T-cell (primary cell): ENCODE measurements at regions of chr1 and their contacts with region 1.

Region 1: GRCh38 chr1:167533851-167534300 is 15.5 kb upstream of the CD247 start:
- DNase-seq: peak in 32 of 35 experiments; percentile 24 to 82 (median 58)
- ATAC-seq: peak; percentile 79 to 81 (median 80)
- H3K4me3 ChIP-seq: no peak overlapping the region
- H3K4me3 Mint-ChIP-seq: no peak overlapping the region
- H3K27ac ChIP-seq: no peak overlapping the region
- H3K27ac Mint-ChIP-seq: no peak overlapping the region
- H3K4me1 ChIP-seq: peaks cover 0 to 5% of the 10 kb centered on the region in 2 experiments
- H3K4me1 Mint-ChIP-seq: peaks cover 0 to 4% (median 3%) of the 10 kb centered on the region in 3 donors
- H3K27me3 ChIP-seq: no peaks in the 10 kb centered on the region
- H3K27me3 Mint-ChIP-seq: no peaks in the 10 kb centered on the region

Region 2: DNA sequence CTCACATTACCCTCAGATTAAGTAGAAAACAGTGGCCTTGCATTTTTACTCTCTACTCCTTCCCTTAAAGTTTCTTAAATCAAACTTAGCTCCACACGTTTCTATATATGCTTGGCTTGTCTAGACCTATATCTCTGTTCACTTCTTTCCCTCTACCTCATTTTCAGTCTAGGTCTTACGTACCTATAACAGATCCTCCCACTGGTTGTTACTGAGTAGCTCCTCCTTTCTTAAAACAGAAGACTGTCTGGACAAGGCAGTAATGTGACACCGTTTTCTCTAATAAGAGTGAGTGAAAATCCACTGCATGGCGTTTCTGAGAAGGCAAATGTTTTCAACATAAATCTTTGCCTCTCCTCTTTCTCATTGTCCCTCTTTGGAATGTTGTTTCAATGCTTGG is 906.3 kb before region 1 on chr1:
- CTCF ChIA-PET with region 1: no interaction called
- POLR2A ChIA-PET with region 1: no interaction called
- DNase-seq: no peak
- ATAC-seq: no peak
- H3K4me3 ChIP-seq: no peak overlapping the region
- H3K4me3 Mint-ChIP-seq: no peak overlapping the region
- H3K27ac ChIP-seq: no peak overlapping the region
- H3K27ac Mint-ChIP-seq: no peak overlapping the region
- H3K4me1 ChIP-seq: no peaks in the 10 kb centered on the region
- H3K4me1 Mint-ChIP-seq: no peaks in the 10 kb centered on the region
- H3K27me3 ChIP-seq: peaks cover 0 to 2% of the 10 kb centered on the region in 2 experiments
- H3K27me3 Mint-ChIP-seq: peaks cover 1 to 9% of the 10 kb centered on the region in 2 donors

Region 3: GRCh38 chr1:167401260-167401873 is 132.5 kb before region 1 on chr1:
- CTCF ChIA-PET with region 1: interaction called, 7 to 10 read pairs
- POLR2A ChIA-PET with region 1: interaction called in 1 of 2 experiments, 3 read pairs
- DNase-seq: peak in 34 of 35 experiments; percentile 6 to 75 (median 31)
- ATAC-seq: peak; percentile 64 to 73 (median 69)
- H3K4me3 ChIP-seq: no peak overlapping the region
- H3K4me3 Mint-ChIP-seq: no peak overlapping the region
- H3K27ac ChIP-seq: no peak overlapping the region
- H3K27ac Mint-ChIP-seq: no peak overlapping the region
- H3K4me1 ChIP-seq: peaks cover 0 to 3% of the 10 kb centered on the region in 2 experiments
- H3K4me1 Mint-ChIP-seq: peaks cover 6% of the 10 kb centered on the region in 3 donors
- H3K27me3 ChIP-seq: no peaks in the 10 kb centered on the region
- H3K27me3 Mint-ChIP-seq: no peaks in the 10 kb centered on the region

Region 4: GRCh38 chr1:167409183-167409582 is 124.7 kb before region 1 on chr1:
- CTCF ChIA-PET with region 1: interaction called in 1 of 2 experiments, 10 read pairs
- POLR2A ChIA-PET with region 1: interaction called in 1 of 2 experiments, 8 read pairs
- DNase-seq: peak in 1 of 35 experiments; percentile 37
- ATAC-seq: peak in 3 of 4 experiments; percentile 45 to 63 (median 62)
- H3K4me3 ChIP-seq: no peak overlapping the region
- H3K4me3 Mint-ChIP-seq: no peak overlapping the region
- H3K27ac ChIP-seq: no peak overlapping the region
- H3K27ac Mint-ChIP-seq: peak overlapping the region in 1 of 2 donors; percentile 5
- H3K4me1 ChIP-seq: no peaks in the 10 kb centered on the region
- H3K4me1 Mint-ChIP-seq: peaks cover 6 to 19% (median 12%) of the 10 kb centered on the region in 3 donors
- H3K27me3 ChIP-seq: no peaks in the 10 kb centered on the region
- H3K27me3 Mint-ChIP-seq: no peaks in the 10 kb centered on the region